ENCODE measurements at regions of chr1 and their contacts with region 1.

Region 1: DNA sequence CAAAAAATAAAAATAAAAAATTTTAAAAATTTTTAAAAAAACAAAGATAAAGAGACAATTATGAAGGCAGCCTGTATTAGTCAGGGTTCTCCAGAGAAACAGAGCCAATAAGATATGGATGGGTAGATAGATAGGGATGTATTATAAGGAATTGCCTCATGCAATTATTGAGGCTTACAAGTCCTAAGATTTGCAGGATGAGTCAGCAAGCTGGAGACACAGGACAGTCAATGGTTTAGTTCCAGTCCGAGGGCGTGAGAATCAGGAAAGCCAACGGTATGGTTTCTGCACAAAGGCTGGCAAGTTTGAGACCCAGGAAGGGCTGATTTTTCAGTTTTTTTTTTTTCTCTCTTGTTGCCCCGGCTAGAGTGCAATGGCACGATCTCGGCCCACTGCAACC is 24.1 kb upstream of the EIF4G3 start:
- DNase-seq: no peak
- ATAC-seq: no peak
- H3K4me3 ChIP-seq: no peak overlapping the region
- H3K27ac ChIP-seq: no peak overlapping the region
- H3K4me1 ChIP-seq: no peaks in the 10 kb centered on the region
- H3K27me3 ChIP-seq: no peaks in the 10 kb centered on the region

Region 2: DNA sequence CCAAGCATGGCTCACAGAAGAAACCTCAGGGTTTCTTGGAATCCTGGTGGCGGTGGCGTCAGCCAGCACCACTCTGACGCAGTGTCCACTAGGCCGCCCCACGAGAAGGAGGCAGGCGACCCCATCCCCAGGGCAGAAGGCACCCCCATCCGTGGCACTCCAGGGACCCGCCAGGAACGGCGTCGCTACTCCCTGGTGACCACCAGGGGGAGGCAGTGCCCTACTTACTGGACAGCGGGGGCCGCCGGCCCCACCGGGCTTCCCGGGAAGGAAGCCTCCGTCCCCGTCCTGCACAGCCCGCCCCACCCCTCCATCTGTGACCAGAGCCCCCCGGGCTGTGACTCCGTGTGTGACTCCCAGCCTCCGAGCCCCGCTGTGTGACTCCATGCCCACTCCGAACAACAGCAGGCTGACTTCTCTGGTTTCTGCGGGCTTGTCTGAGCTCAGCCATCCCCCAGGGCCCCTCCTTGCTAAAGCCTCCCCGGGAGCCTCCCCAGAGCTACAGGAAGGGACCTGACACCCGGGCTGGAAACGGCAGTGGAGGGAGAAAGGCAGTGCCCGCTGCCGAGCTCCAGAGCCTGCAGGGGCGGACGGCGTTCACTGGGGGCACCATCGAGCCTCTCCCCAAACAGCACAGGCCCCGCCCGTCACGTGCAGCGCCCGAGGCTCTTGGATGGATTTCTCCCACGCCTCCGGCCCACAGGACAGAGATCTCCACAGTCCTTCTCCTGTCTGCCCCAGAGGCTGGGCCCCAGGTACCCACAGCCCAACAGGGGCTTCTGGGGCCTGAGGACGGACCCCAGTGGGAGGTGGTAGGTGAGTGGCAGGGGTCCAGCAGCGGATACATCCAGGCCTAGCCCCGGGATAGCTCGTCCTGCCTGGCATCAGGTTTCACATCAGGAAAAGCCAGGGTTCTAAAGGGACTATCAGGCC is 504.1 kb before region 1 on chr1:
- intact Hi-C with region 1: loop called (anchors 1 to 5 kb)
- DNase-seq: peak; percentile 87 to 95 (median 94)
- ATAC-seq: peak; percentile 93 to 94
- H3K4me3 ChIP-seq: peak overlapping the region; percentile 54
- H3K27ac ChIP-seq: peak overlapping the region; percentile 71
- H3K4me1 ChIP-seq: no peaks in the 10 kb centered on the region
- H3K27me3 ChIP-seq: no peaks in the 10 kb centered on the region

Region 3: DNA sequence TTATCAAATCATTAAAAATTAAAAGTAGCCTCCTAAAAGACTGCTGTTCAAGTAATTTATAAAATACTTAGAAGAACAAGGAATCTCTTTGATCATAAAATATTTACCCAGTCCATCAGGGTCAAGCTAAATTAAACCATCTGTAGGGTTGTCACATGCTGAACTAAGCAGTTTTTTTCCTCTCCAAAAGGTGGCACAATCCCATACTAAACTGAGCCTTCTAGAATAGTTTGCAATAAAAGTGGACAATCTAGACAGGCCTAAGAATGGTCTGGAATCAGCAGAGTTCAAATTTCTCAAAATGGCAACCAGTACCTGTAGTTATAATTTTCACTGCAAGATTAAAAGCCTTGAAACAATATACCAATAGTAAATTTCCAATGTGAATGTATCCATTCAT is 218.9 kb before region 1 on chr1:
- intact Hi-C with region 1: loop called in 3 of 4 experiments (anchors 5 to 10 kb)
- DNase-seq: no peak
- ATAC-seq: peak; percentile 58 to 71
- H3K4me3 ChIP-seq: no peak overlapping the region
- H3K27ac ChIP-seq: no peak overlapping the region
- H3K4me1 ChIP-seq: no peaks in the 10 kb centered on the region
- H3K27me3 ChIP-seq: no peaks in the 10 kb centered on the region

Measured in right cardiac atrium (tissue), 5 donors.